ENCODE measurements at regions of chr4 and their contacts with region 1.

Region 1: DNA sequence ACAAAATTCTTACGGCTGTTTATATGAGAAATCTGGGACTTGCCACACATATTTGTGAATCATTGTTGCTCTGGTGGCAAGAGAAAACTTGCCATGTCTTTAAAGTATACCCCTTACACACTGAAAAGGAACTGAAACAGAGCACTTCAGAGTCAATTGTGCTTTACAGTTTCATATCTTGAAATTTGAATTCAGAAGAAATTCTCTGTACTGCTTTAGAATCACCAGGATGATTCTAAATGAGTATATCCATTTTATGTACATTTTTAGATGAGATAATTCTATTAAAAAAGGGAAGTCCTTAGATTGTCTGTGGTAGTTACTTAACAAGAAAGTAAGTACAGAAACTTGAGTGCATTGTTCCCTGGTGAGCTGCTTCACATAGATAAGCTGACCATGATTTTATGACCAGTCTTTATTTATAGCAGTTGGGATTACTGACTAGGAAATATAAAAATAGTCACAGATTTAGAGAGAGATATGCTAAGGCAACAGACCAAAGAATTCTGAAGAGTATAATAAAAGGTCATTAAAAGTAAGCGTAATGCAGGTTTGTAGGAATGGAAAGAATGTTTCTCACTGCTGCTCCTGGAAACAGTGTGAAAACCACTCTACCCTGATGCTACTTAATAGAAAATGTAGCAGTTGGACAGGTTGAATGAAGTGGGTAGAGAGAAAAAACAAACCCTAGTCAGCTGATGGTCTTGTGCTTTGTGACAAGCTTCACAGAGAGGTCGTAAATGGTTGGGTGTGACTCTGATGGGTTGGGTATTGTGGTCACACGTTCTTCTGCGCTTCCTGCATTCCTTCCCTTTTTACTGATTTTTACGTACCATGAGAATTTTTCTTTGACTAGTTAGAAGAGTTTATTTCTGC is 41.0 kb downstream of the FNIP2 start:
- DNase-seq: peak; percentile 54 to 91
- H3K4me3 ChIP-seq: no peak overlapping the region
- H3K27ac ChIP-seq: peak overlapping the region; percentile 84
- H3K4me1 ChIP-seq: peaks cover 45% of the 10 kb centered on the region
- H3K27me3 ChIP-seq: no peaks in the 10 kb centered on the region
- CTCF ChIP-seq: no peak

Region 2: GRCh38 chr4:158722917-158723793 is 86.7 kb before region 1 on chr4 and contains the start of gene PPID:
- CTCF ChIA-PET with region 1: no interaction called
- POLR2A ChIA-PET with region 1: no interaction called
- intact Hi-C with region 1: loop called (anchors 1 kb)
- DNase-seq: peak; percentile 71 to 83
- H3K4me3 ChIP-seq: peak within 1 kb of the TSS; percentile 65
- H3K27ac ChIP-seq: peak within 1 kb of the TSS; percentile 83
- H3K4me1 ChIP-seq: no peaks in the 10 kb centered on the region; the same call in 1 of the 2 replicates
- H3K27me3 ChIP-seq: no peaks in the 10 kb centered on the region
- CTCF ChIP-seq: no peak
- total RNA-seq, gene PPID: 21.4 and 28.2 TPM in 2 replicates

Region 3: GRCh38 chr4:158768555-158769174 is 41.2 kb before region 1 on chr4 and contains the start of gene FNIP2:
- CTCF ChIA-PET with region 1: no interaction called
- POLR2A ChIA-PET with region 1: interaction called, 5 read pairs
- intact Hi-C with region 1: loop called (anchors 2 kb)
- DNase-seq: peak; percentile 34 to 75
- H3K4me3 ChIP-seq: peak within 1 kb of the TSS; percentile 86
- H3K27ac ChIP-seq: no peak within 1 kb of the TSS
- H3K4me1 ChIP-seq: no peaks in the 10 kb centered on the region
- H3K27me3 ChIP-seq: no peaks in the 10 kb centered on the region
- CTCF ChIP-seq: no peak
- total RNA-seq, gene FNIP2: 2.1 and 2.5 TPM in 2 replicates

Region 4: GRCh38 chr4:158823461-158823873 is 13.6 kb after region 1 on chr4:
- CTCF ChIA-PET with region 1: no interaction called
- POLR2A ChIA-PET with region 1: no interaction called
- intact Hi-C with region 1: loop called (anchors 1 kb)
- DNase-seq: no peak
- H3K4me3 ChIP-seq: no peak overlapping the region
- H3K27ac ChIP-seq: no peak overlapping the region
- H3K4me1 ChIP-seq: peaks cover 52% of the 10 kb centered on the region
- H3K27me3 ChIP-seq: no peaks in the 10 kb centered on the region
- CTCF ChIP-seq: no peak

Measured in PC-9 (cell line).